ENCODE measurements at regions of chr14 and their contacts with region 1.

Region 1: GRCh38 chr14:56694609-56695008 is 115.0 kb downstream of the TMEM260 start:
- DNase-seq: no peak
- ATAC-seq: no peak
- H3K4me3 Mint-ChIP-seq: no peak overlapping the region
- H3K27ac Mint-ChIP-seq: no peak overlapping the region
- H3K4me1 Mint-ChIP-seq: no peaks in the 10 kb centered on the region
- H3K27me3 Mint-ChIP-seq: peaks cover 7% of the 10 kb centered on the region
- CTCF ChIP-seq: no peak

Region 2: GRCh38 chr14:56452940-56453339 is 241.7 kb before region 1 on chr14:
- CTCF ChIA-PET with region 1: no interaction called
- POLR2A ChIA-PET with region 1: no interaction called
- intact Hi-C with region 1: no loop called
- DNase-seq: no peak
- ATAC-seq: no peak
- H3K4me3 Mint-ChIP-seq: no peak overlapping the region
- H3K27ac Mint-ChIP-seq: no peak overlapping the region
- H3K4me1 Mint-ChIP-seq: no peaks in the 10 kb centered on the region
- H3K27me3 Mint-ChIP-seq: peaks cover 20% of the 10 kb centered on the region
- CTCF ChIP-seq: no peak

Region 3: GRCh38 chr14:56561606-56562005 is 133.0 kb before region 1 on chr14:
- CTCF ChIA-PET with region 1: no interaction called
- POLR2A ChIA-PET with region 1: no interaction called
- intact Hi-C with region 1: loop called (anchors 5 kb)
- DNase-seq: no peak
- ATAC-seq: no peak
- H3K4me3 Mint-ChIP-seq: no peak overlapping the region
- H3K27ac Mint-ChIP-seq: no peak overlapping the region
- H3K4me1 Mint-ChIP-seq: no peaks in the 10 kb centered on the region
- H3K27me3 Mint-ChIP-seq: peaks cover 24% of the 10 kb centered on the region
- CTCF ChIP-seq: no peak